ENCODE measurements at regions of chr12 and their contacts with region 1.

Region 1: DNA sequence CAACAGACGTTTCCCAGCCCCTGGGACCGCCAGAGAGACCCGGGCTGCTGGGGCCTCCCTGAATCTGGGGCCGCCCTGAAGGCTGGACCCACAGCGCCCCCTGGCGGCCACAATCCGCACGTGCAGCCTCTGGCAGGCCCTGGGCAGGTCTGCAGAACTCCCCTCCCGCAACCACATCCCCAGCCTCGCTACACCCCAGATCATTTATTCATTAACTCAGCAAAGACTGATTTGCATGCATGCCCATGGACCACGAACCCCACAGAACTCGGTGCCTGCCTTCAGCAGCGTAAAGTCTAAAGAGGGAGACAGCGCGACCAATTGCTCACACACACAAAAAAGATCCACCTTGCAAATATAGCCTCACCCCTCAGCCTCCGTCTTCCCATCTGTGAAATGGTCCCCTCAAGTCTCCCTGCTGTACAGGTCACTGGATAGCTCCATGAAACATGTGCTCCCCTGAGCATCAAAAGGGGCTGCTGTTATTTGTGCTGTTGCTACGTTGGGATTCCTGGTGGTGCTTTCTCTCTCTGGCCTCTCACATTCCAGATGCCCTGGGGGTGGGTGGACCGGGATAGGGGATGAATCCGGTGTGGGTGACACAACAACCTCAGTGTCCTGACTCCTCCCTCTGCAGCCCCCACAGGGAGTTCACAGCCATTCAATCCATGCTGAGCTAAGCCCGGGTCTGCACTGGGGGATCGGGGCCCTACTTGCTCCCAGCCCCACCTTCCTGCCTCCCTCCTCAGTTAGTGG is 96.4 kb downstream of the SCARB1 start:
- DNase-seq: peak; percentile 72 to 76
- H3K4me3 ChIP-seq: no peak overlapping the region
- H3K27ac ChIP-seq: peak overlapping the region in 2 of 3 donors; percentile 14 to 56
- H3K4me1 ChIP-seq: peaks cover 5 to 26% of the 10 kb centered on the region in 2 donors
- H3K27me3 ChIP-seq: no peaks in the 10 kb centered on the region
- CTCF ChIP-seq: peak; percentile 95 to 100 (median 98)
- POLR2A ChIP-seq: no peak

Region 2: GRCh38 chr12:124036674-124037109 is 730.6 kb before region 1 on chr12:
- intact Hi-C with region 1: loop called (anchors 2 kb)
- DNase-seq: peak; percentile 36 to 50
- H3K4me3 ChIP-seq: no peak overlapping the region
- H3K27ac ChIP-seq: no peak overlapping the region
- H3K4me1 ChIP-seq: peaks cover 0 to 6% of the 10 kb centered on the region in 2 donors
- H3K27me3 ChIP-seq: no peaks in the 10 kb centered on the region
- CTCF ChIP-seq: peak; percentile 82 to 95 (median 89)
- POLR2A ChIP-seq: no peak

Region 3: GRCh38 chr12:124359671-124360581 is 407.3 kb before region 1 on chr12:
- intact Hi-C with region 1: loop called (anchors 10 kb)
- DNase-seq: peak; percentile 95 to 97
- H3K4me3 ChIP-seq: no peak overlapping the region
- H3K27ac ChIP-seq: peak overlapping the region; percentile 79 to 85 (median 84)
- H3K4me1 ChIP-seq: peaks cover 23 to 31% of the 10 kb centered on the region in 2 donors
- H3K27me3 ChIP-seq: no peaks in the 10 kb centered on the region
- CTCF ChIP-seq: peak in 1 of 6 experiments; percentile 8
- POLR2A ChIP-seq: no peak

Region 4: GRCh38 chr12:124480469-124481256 is 286.6 kb before region 1 on chr12:
- intact Hi-C with region 1: loop called (anchors 10 kb)
- DNase-seq: peak; percentile 94 to 95
- H3K4me3 ChIP-seq: no peak overlapping the region
- H3K27ac ChIP-seq: peak overlapping the region in 2 of 3 donors; percentile 43 to 45
- H3K4me1 ChIP-seq: peaks cover 9 to 20% of the 10 kb centered on the region in 2 donors
- H3K27me3 ChIP-seq: no peaks in the 10 kb centered on the region
- CTCF ChIP-seq: no peak
- POLR2A ChIP-seq: no peak

Region 5: GRCh38 chr12:124567661-124568373 is 199.4 kb before region 1 on chr12:
- intact Hi-C with region 1: loop called (anchors 5 kb)
- DNase-seq: peak; percentile 95
- H3K4me3 ChIP-seq: peak overlapping the region in 1 of 3 donors; percentile 28
- H3K27ac ChIP-seq: peak overlapping the region; percentile 64 to 89 (median 79)
- H3K4me1 ChIP-seq: peaks cover 40 to 42% of the 10 kb centered on the region in 2 donors
- H3K27me3 ChIP-seq: no peaks in the 10 kb centered on the region
- CTCF ChIP-seq: no peak
- POLR2A ChIP-seq: no peak

Region 6: GRCh38 chr12:124636138-124636978 is 130.9 kb before region 1 on chr12:
- intact Hi-C with region 1: no loop called
- DNase-seq: no peak
- H3K4me3 ChIP-seq: no peak overlapping the region
- H3K27ac ChIP-seq: no peak overlapping the region
- H3K4me1 ChIP-seq: no peaks in the 10 kb centered on the region
- H3K27me3 ChIP-seq: no peaks in the 10 kb centered on the region
- CTCF ChIP-seq: no peak
- POLR2A ChIP-seq: no peak

Region 7: GRCh38 chr12:124837958-124838803 is 70.9 kb after region 1 on chr12:
- intact Hi-C with region 1: no loop called
- DNase-seq: peak in 1 of 2 donors; percentile 26
- H3K4me3 ChIP-seq: no peak overlapping the region
- H3K27ac ChIP-seq: peak overlapping the region in 1 of 3 donors; percentile 46
- H3K4me1 ChIP-seq: peaks cover 0 to 12% of the 10 kb centered on the region in 2 donors
- H3K27me3 ChIP-seq: no peaks in the 10 kb centered on the region
- CTCF ChIP-seq: no peak
- POLR2A ChIP-seq: no peak